CD4-positive, alpha-beta T cell (primary cell): ENCODE measurements at regions of chr12 and their contacts with region 1.

Region 1: DNA sequence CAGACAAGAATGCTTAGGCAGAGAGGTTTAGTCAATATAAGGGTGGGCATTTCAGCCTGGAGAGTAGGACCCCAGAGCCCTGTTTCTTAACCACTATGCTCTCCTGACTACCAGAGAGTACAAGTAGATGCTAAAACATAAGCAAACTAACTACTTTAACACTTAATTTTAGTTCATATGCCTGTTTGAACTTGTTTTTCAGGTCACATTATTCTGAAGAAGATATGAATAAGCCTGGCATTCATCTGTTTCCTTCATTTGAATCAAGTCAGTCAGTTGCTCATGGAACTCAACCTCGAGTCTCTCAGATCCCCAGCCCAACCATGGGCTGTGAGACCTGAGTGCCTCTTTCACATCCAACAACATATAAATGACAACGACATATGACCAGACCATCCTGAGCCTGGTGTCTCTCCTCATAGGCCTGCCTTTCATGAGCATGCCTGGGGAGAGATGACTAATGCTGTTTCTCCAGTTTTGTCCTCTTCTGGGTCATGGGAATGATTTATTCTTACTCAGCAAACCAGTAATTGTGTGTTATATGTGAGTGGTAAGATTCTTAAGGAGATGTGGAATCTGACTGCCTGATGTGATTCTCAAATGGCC is 251.1 kb upstream of the BTG1 start:
- DNase-seq: peak in 1 of 14 experiments; percentile 29
- ATAC-seq: no peak
- H3K4me3 ChIP-seq: no peak overlapping the region
- H3K4me3 Mint-ChIP-seq: peak overlapping the region; percentile 52
- H3K27ac ChIP-seq: peak overlapping the region; percentile 72 to 80
- H3K27ac Mint-ChIP-seq: peak overlapping the region; percentile 95
- H3K4me1 ChIP-seq: peaks cover 81% of the 10 kb centered on the region
- H3K4me1 Mint-ChIP-seq: peaks cover 99% of the 10 kb centered on the region
- H3K27me3 ChIP-seq: no peaks in the 10 kb centered on the region
- H3K27me3 Mint-ChIP-seq: no peaks in the 10 kb centered on the region
- CTCF ChIP-seq: no peak

Region 2: GRCh38 chr12:92378682-92379479 is 17.9 kb before region 1 on chr12:
- CTCF ChIA-PET with region 1: interaction called, 3 read pairs
- POLR2A ChIA-PET with region 1: interaction called, 17 read pairs
- intact Hi-C with region 1: no loop called
- DNase-seq: peak in 6 of 14 experiments; percentile 21 to 62 (median 48)
- ATAC-seq: peak; percentile 93
- H3K4me3 ChIP-seq: no peak overlapping the region
- H3K4me3 Mint-ChIP-seq: peak overlapping the region; percentile 14
- H3K27ac ChIP-seq: peak overlapping the region; percentile 26 to 66
- H3K27ac Mint-ChIP-seq: peak overlapping the region; percentile 84
- H3K4me1 ChIP-seq: peaks cover 26% of the 10 kb centered on the region
- H3K4me1 Mint-ChIP-seq: peaks cover 84% of the 10 kb centered on the region
- H3K27me3 ChIP-seq: no peaks in the 10 kb centered on the region
- H3K27me3 Mint-ChIP-seq: no peaks in the 10 kb centered on the region
- CTCF ChIP-seq: no peak

Region 3: DNA sequence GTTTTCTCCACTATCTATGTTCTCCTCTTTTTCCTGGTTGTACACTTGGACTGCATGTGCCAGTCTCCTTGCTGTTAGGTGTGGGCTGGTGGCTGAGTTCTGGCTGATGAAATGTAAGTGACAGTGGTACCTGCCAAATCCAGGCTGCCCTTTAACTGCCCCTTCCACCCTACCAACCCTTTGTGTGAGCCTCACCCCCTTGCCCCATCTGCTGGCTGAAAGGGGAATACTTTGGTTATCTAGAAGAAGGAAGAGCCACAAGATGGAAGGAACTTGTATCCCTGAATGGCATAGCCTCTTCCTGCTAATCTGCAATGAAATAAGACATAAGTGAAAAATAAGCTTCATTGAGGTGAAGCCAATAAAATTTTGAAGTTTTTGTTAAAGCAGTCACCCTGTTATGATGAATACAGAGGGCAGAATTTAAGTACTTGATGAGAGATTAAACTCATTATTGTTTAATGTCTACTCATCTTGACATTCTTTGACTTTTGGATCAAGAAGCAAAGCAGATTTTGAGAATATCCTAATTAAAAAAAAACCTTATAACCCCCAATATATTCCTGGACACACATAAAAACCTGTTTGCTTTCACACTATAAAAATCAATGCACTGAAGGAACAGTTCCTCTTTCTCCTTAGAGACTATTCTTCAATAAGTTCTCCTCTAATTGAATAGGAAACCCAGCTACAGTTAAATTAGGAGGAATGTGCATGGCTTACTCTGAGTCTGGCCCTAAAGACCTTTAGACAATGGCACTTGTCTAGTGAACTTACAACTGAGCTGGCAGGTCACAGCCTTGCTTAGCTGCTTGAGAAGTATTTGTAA is 11.5 kb after region 1 on chr12:
- CTCF ChIA-PET with region 1: interaction called, 7 read pairs
- POLR2A ChIA-PET with region 1: interaction called, 12 read pairs
- intact Hi-C with region 1: no loop called
- DNase-seq: peak in 7 of 14 experiments; percentile 21 to 76 (median 59)
- ATAC-seq: no peak
- H3K4me3 ChIP-seq: no peak overlapping the region
- H3K4me3 Mint-ChIP-seq: peak overlapping the region; percentile 9
- H3K27ac ChIP-seq: no peak overlapping the region
- H3K27ac Mint-ChIP-seq: peak overlapping the region; percentile 40
- H3K4me1 ChIP-seq: peaks cover 43% of the 10 kb centered on the region
- H3K4me1 Mint-ChIP-seq: peaks cover 73% of the 10 kb centered on the region
- H3K27me3 ChIP-seq: no peaks in the 10 kb centered on the region
- H3K27me3 Mint-ChIP-seq: no peaks in the 10 kb centered on the region
- CTCF ChIP-seq: no peak

Region 4: DNA sequence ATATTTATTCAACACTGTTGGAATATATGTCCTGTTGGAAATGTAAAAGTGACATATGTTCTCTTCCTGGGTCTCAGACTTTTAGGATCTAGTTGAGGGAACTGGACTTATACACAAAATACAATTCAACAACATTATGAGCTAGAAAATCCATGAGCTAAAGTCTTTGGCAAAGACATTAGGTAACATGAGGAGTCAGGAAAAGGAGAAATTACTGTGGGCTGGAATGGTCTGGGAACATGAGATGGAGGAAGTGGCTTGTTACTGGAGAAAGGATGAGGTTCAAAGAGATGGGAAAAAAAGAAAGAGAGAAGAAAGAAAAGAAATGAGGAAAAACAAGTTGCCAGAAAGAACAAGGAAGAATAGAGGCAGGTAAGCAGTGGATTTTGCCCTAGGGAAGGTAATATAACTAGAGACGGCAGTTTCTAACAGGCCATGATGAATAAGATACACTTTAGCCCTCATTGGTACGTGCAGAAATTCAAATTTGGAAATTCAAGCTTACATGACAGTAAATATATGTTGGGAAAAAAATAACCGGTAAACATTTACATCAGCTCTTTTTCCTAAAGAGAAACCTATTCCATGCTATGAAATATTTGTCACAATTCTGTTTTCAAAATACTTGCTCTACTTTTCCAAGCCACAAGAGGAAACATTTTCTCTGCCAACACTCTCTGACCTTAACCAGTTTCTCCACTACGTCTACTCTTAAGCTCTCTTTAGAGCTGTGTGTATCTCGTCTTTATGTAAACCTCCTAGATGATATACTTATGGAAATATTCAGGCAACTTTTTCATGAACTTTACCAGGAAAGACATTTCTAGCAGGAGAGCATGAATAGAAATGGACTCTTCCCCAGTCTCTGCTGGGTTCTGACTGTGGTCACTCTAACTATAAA is 17.7 kb after region 1 on chr12:
- CTCF ChIA-PET with region 1: no interaction called
- POLR2A ChIA-PET with region 1: interaction called, 12 read pairs
- intact Hi-C with region 1: no loop called
- DNase-seq: no peak
- ATAC-seq: no peak
- H3K4me3 ChIP-seq: no peak overlapping the region
- H3K4me3 Mint-ChIP-seq: no peak overlapping the region
- H3K27ac ChIP-seq: no peak overlapping the region
- H3K27ac Mint-ChIP-seq: no peak overlapping the region
- H3K4me1 ChIP-seq: no peaks in the 10 kb centered on the region
- H3K4me1 Mint-ChIP-seq: peaks cover 37% of the 10 kb centered on the region
- H3K27me3 ChIP-seq: no peaks in the 10 kb centered on the region
- H3K27me3 Mint-ChIP-seq: no peaks in the 10 kb centered on the region
- CTCF ChIP-seq: no peak

Region 5: DNA sequence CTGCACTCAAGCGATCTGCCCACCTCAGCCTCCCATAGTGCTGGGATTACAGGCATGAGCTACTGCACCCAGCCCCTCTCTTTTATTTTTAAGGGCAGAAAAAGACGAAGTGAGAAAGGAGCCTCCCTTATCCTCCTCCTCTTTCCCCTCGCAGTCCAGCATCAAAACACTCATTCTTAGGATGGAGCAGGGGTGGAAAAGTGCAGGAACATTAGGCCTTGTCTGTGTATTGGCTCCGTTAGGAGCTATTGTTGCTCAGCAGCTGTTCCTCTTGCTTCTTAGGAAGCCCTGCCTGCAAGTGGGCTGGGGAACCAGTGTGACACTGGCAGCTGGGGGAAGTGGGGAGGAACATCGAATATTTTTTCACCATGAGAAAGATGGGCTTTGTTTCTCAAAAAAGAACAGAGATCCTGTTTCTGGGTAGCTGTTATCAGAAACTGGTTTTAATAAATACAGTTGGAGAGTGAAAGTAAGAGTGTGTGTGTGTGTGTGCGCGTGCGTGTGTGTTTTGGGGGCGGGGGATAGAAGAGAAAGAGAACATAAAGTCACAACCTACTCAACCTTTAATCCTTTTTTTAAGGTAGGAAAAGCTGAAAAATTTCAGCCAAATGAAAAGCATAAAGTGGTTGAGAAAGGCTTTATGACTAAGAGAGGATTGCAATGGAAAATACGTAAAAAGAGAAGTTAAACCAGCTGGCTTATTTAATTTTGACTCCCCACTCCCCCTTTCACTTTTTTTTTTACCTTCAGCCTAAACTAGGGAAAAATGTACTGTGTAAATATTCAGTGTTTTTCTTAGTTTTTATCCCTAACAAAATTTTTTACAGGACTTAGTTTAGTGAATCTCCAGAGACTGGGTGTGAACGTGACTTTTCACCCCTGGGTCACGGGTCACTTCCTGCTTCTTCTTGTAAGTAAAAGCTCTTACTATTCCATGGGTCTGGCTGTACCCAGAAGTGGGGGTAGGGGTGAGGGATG is 108.8 kb after region 1 on chr12:
- CTCF ChIA-PET with region 1: no interaction called
- POLR2A ChIA-PET with region 1: interaction called, 24 read pairs
- intact Hi-C with region 1: no loop called
- DNase-seq: peak; percentile 10 to 75 (median 34)
- ATAC-seq: peak; percentile 75
- H3K4me3 ChIP-seq: peak overlapping the region; percentile 41
- H3K4me3 Mint-ChIP-seq: peak overlapping the region; percentile 84
- H3K27ac ChIP-seq: peak overlapping the region; percentile 38 to 79
- H3K27ac Mint-ChIP-seq: peak overlapping the region; percentile 90
- H3K4me1 ChIP-seq: peaks cover 32% of the 10 kb centered on the region
- H3K4me1 Mint-ChIP-seq: peaks cover 29% of the 10 kb centered on the region
- H3K27me3 ChIP-seq: no peaks in the 10 kb centered on the region
- H3K27me3 Mint-ChIP-seq: no peaks in the 10 kb centered on the region
- CTCF ChIP-seq: no peak

Region 6: DNA sequence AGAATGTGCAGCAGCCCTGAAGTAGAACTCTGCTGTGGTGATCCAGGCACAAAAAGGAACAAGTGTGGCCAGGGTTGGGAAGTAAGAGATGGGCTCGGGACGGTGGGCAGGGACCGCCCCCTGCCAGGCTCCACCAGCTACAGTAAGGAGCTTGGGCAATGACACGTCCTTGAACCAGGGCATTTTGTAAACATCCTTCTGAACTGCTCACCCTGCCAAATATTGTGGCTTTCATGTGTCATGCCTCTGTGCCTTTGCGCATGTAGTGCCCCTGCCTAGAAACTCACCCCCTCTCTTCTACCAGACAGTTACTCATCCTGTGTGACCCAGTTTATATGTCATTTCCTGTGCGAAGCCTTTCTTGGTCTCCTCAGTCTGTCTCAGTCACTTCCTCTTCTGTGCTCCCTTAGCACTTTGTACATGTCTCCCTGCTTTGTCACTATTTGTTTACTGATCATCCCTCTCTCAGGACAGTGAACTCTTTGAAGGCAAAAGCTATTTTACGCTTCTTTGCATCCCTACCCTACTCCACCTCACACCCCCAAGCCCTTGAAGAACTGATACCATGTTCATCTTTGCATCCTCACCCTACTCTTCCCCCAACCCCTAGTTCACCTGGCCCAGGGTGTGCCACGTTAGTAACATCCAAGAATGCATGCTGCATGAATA is 197.1 kb after region 1 on chr12:
- CTCF ChIA-PET with region 1: no interaction called
- POLR2A ChIA-PET with region 1: no interaction called
- intact Hi-C with region 1: loop called in 1 of 2 experiments (anchors 1 kb)
- DNase-seq: peak; percentile 59 to 98 (median 72)
- ATAC-seq: peak; percentile 84
- H3K4me3 ChIP-seq: no peak overlapping the region
- H3K4me3 Mint-ChIP-seq: peak overlapping the region; percentile 28
- H3K27ac ChIP-seq: peak overlapping the region; percentile 96 to 97
- H3K27ac Mint-ChIP-seq: peak overlapping the region; percentile 91
- H3K4me1 ChIP-seq: peaks cover 31% of the 10 kb centered on the region
- H3K4me1 Mint-ChIP-seq: peaks cover 43% of the 10 kb centered on the region
- H3K27me3 ChIP-seq: no peaks in the 10 kb centered on the region
- H3K27me3 Mint-ChIP-seq: no peaks in the 10 kb centered on the region
- CTCF ChIP-seq: no peak

Region 7: GRCh38 chr12:93174048-93174447 is 777.3 kb after region 1 on chr12:
- CTCF ChIA-PET with region 1: no interaction called
- POLR2A ChIA-PET with region 1: no interaction called
- intact Hi-C with region 1: no loop called
- DNase-seq: no peak
- ATAC-seq: no peak
- H3K4me3 ChIP-seq: no peak overlapping the region
- H3K4me3 Mint-ChIP-seq: no peak overlapping the region
- H3K27ac ChIP-seq: no peak overlapping the region
- H3K27ac Mint-ChIP-seq: no peak overlapping the region
- H3K4me1 ChIP-seq: no peaks in the 10 kb centered on the region
- H3K4me1 Mint-ChIP-seq: no peaks in the 10 kb centered on the region
- H3K27me3 ChIP-seq: no peaks in the 10 kb centered on the region
- H3K27me3 Mint-ChIP-seq: no peaks in the 10 kb centered on the region
- CTCF ChIP-seq: no peak